Kidney (tissue), 22 donors: ENCODE measurements at regions of chr3 and their contacts with region 1.

Region 1: GRCh38 chr3:53195602-53196574 is 34.9 kb downstream of the PRKCD start:
- DNase-seq: peak; percentile 68 to 82 (median 76)
- H3K4me3 ChIP-seq: no peak overlapping the region
- H3K27ac ChIP-seq: no peak overlapping the region
- H3K4me1 ChIP-seq: peaks cover 0 to 11% (median 0%) of the 10 kb centered on the region in 3 donors
- H3K27me3 ChIP-seq: no peaks in the 10 kb centered on the region
- CTCF ChIP-seq: peak; percentile 97

Region 2: DNA sequence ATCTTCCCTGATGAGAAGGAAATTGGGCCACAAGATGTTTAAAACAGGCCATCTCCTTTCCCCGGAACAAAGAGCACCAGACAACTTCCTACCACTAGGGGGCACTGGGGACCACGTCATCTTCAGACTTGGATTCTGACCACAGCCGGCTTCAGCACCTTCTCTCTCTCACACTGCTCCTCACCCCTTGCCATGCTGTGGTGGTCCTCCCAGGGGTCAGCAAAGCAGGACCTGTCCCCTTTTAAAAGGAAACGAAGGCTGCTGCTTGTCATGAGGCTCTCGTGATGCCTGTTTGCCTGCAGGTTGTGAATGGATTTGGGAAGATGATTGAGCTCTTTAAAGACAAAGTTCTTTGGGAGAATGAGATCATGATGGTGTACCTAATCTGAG is 81.9 kb before region 1 on chr3:
- intact Hi-C with region 1: loop called (anchors 5 kb)
- DNase-seq: peak; percentile 78 to 90 (median 81)
- H3K4me3 ChIP-seq: no peak overlapping the region
- H3K27ac ChIP-seq: no peak overlapping the region
- H3K4me1 ChIP-seq: no peaks in the 10 kb centered on the region
- H3K27me3 ChIP-seq: no peaks in the 10 kb centered on the region
- CTCF ChIP-seq: peak; percentile 94

Region 3: GRCh38 chr3:53130179-53131061 is 65.5 kb before region 1 on chr3 and contains the start of gene RFT1:
- intact Hi-C with region 1: loop called (anchors 10 kb)
- DNase-seq: peak; percentile 97 to 99 (median 98)
- H3K4me3 ChIP-seq: peak within 1 kb of the TSS; percentile 82 to 91 (median 84)
- H3K27ac ChIP-seq: peak within 1 kb of the TSS; percentile 90 to 92
- H3K4me1 ChIP-seq: peaks cover 5 to 16% (median 12%) of the 10 kb centered on the region in 3 donors
- H3K27me3 ChIP-seq: no peaks in the 10 kb centered on the region
- CTCF ChIP-seq: no peak
- total RNA-seq, gene RFT1: 22.8 TPM

Region 4: DNA sequence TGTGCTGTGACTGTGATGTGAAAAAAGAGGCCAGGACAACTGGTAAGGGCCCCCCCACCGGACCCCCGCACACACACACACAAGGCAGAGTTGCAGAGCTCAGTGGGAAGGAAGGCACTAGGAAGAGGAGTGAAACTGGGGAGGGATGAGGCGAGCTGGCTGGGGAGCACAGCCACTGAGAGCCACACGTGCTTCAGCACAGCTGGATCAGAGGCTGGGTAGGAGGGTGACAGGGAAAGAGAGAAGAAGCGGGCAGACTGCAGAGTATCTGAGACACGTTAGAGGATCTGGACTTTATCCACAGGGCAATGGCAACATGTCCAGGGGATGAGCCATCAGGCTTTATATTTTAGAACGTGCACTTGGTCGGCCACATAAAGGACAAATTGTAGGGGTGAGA is 98.0 kb after region 1 on chr3:
- intact Hi-C with region 1: no loop called
- DNase-seq: no peak
- H3K4me3 ChIP-seq: no peak overlapping the region
- H3K27ac ChIP-seq: no peak overlapping the region
- H3K4me1 ChIP-seq: no peaks in the 10 kb centered on the region
- H3K27me3 ChIP-seq: no peaks in the 10 kb centered on the region
- CTCF ChIP-seq: no peak